ENCODE measurements at regions of chr6 and their contacts with region 1.

Region 1: DNA sequence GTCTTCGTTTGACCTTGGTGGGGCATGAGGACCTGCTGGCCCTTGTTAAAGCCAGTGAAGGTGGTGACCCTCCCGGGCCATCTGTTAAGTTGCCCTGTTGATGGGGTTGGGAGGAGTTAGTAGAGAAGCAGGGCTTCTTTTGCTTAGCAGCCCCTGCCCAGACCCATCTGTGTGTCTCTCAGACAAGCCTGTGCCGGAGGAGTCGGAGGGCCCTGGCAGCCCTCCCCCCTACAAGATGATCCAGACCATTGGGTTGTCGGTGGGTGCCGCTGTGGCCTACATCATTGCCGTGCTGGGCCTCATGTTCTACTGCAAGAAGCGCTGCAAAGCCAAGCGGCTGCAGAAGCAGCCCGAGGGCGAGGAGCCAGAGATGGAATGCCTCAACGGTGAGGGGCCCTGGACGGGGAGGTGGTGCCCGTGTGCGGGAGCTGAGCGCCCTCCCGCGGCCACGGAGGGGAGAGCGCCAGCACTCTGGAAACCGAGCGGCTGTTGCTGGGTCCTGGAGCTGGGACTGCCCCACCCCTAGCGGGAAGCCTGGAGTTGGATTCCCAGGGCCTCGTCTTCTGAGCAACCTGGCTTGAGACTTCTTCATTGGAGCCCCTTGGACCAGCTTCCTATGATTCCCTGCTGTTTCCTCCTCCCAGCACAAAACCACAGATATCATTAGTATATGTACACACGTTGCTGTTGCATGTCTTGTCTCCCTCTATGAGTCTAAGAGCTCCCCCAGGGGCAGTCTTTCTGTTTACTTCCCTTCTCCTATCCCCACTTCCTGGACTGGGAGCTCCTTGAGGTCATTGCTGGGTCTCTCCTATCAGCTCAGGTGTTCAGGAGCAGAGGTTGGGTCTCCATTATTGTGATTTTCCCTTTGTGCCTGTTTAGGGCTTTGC is 27.6 kb upstream of the SRF start:
- DNase-seq: peak; percentile 84
- H3K4me3 ChIP-seq: no peak overlapping the region
- H3K27ac ChIP-seq: no peak overlapping the region
- H3K4me1 ChIP-seq: no peaks in the 10 kb centered on the region
- H3K27me3 ChIP-seq: no peaks in the 10 kb centered on the region
- CTCF ChIP-seq: peak; percentile 98 to 100
- POLR2A ChIP-seq: no peak

Region 2: GRCh38 chr6:42907336-42907735 is 236.1 kb before region 1 on chr6:
- CTCF ChIA-PET with region 1: interaction called, 10 read pairs
- POLR2A ChIA-PET with region 1: no interaction called
- dilution Hi-C with region 1: no loop called
- intact Hi-C with region 1: no loop called
- DNase-seq: no peak
- H3K4me3 ChIP-seq: no peak overlapping the region
- H3K27ac ChIP-seq: no peak overlapping the region
- H3K4me1 ChIP-seq: no peaks in the 10 kb centered on the region
- H3K27me3 ChIP-seq: peaks cover 2 to 3% of the 10 kb centered on the region in 2 experiments
- CTCF ChIP-seq: no peak
- POLR2A ChIP-seq: no peak

Region 3: GRCh38 chr6:43013843-43014433 is 129.5 kb before region 1 on chr6 and contains the starts of genes KLHDC3 and MEA1:
- CTCF ChIA-PET with region 1: interaction called, 55 read pairs
- POLR2A ChIA-PET with region 1: no interaction called
- dilution Hi-C with region 1: no loop called
- intact Hi-C with region 1: loop called (anchors 1 kb)
- DNase-seq: peak; percentile 100
- H3K4me3 ChIP-seq: peak within 1 kb of the TSS; percentile 58 to 87 (median 72)
- H3K27ac ChIP-seq: peak within 1 kb of the TSS; percentile 52
- H3K4me1 ChIP-seq: peaks cover 17% of the 10 kb centered on the region
- H3K27me3 ChIP-seq: no peaks in the 10 kb centered on the region
- CTCF ChIP-seq: no peak
- POLR2A ChIP-seq: no peak
- total RNA-seq, gene KLHDC3: 84.6 and 84.8 TPM in 2 replicates
- total RNA-seq, gene MEA1: 55.6 and 62.5 TPM in 2 replicates

Region 4: DNA sequence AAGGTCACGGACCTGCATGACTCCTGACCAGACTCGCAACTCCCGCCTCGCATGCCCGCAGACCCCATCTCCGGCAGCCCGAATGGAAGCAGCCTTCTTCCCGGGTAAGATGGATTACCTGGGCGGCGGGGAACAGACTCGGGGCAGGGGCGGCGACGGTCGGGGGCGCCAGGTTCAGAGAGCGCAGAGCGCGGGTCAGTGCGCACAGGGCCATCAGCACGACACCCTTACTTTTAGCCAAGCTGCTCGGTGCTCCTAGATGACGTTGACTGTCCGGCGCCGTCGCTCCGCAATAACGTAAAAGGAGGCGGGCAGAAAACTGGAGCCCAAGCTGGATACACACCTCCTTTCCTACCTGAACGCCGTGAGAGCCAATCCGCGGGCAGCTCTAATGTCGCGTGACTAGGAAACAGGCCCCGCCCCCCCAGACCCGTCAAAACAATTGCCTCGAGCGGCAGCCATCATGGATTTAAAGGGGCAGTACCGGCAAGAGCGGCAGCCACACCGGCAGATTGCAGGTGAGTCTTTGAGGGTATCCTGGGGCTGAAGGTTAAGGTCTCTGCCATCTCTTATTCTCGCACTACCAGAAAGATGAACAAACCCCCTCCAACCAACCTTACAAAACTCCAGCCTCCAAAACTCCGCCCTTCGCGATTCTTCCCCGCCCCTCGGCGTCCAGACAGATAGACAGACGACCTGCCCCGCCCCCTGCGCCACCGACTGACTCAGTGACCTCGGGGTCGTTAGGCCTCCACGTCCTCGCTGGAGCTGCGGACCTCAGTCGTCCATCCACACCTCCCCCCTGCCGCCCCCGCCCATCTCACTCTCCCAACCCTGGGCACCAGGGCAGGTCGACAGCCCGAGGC is 84.1 kb before region 1 on chr6 and contains the starts of genes KLC4 and MRPL2:
- CTCF ChIA-PET with region 1: interaction called, 8 read pairs
- POLR2A ChIA-PET with region 1: interaction called, 4 read pairs
- dilution Hi-C with region 1: no loop called
- intact Hi-C with region 1: loop called (anchors 5 kb)
- DNase-seq: peak; percentile 100
- H3K4me3 ChIP-seq: peak within 1 kb of the TSS; percentile 80 to 96 (median 94)
- H3K27ac ChIP-seq: peak within 1 kb of the TSS; percentile 91
- H3K4me1 ChIP-seq: peaks cover 15% of the 10 kb centered on the region
- H3K27me3 ChIP-seq: no peaks in the 10 kb centered on the region
- CTCF ChIP-seq: no peak
- POLR2A ChIP-seq: peak; percentile 92
- total RNA-seq, gene KLC4: 26.8 and 26.9 TPM in 2 replicates
- total RNA-seq, gene MRPL2: 59.7 and 63.6 TPM in 2 replicates

Region 5: GRCh38 chr6:43075670-43076463 is 67.6 kb before region 1 on chr6 and contains the start of gene PTK7:
- CTCF ChIA-PET with region 1: interaction called, 22 read pairs
- POLR2A ChIA-PET with region 1: interaction called, 8 read pairs
- dilution Hi-C with region 1: no loop called
- intact Hi-C with region 1: no loop called
- DNase-seq: peak; percentile 40
- H3K4me3 ChIP-seq: peak within 1 kb of the TSS; percentile 57 to 88 (median 74)
- H3K27ac ChIP-seq: peak within 1 kb of the TSS; percentile 2
- H3K4me1 ChIP-seq: peaks cover 7% of the 10 kb centered on the region
- H3K27me3 ChIP-seq: peaks cover 0 to 6% of the 10 kb centered on the region in 2 experiments
- CTCF ChIP-seq: no peak
- POLR2A ChIP-seq: no peak
- total RNA-seq, gene PTK7: 65.3 and 65.6 TPM in 2 replicates

Region 6: GRCh38 chr6:43310624-43311023 is 167.1 kb after region 1 on chr6:
- CTCF ChIA-PET with region 1: no interaction called
- POLR2A ChIA-PET with region 1: no interaction called
- dilution Hi-C with region 1: no loop called
- intact Hi-C with region 1: no loop called
- DNase-seq: no peak
- H3K4me3 ChIP-seq: no peak overlapping the region
- H3K27ac ChIP-seq: no peak overlapping the region
- H3K4me1 ChIP-seq: peaks cover 8% of the 10 kb centered on the region
- H3K27me3 ChIP-seq: peaks cover 13 to 16% of the 10 kb centered on the region in 2 experiments
- CTCF ChIP-seq: no peak
- POLR2A ChIP-seq: no peak

Measured in endothelial cell of umbilical vein (primary cell).